Prostate gland (tissue), 2 donors: ENCODE measurements at regions of chr10 and their contacts with region 1.

Region 1: DNA sequence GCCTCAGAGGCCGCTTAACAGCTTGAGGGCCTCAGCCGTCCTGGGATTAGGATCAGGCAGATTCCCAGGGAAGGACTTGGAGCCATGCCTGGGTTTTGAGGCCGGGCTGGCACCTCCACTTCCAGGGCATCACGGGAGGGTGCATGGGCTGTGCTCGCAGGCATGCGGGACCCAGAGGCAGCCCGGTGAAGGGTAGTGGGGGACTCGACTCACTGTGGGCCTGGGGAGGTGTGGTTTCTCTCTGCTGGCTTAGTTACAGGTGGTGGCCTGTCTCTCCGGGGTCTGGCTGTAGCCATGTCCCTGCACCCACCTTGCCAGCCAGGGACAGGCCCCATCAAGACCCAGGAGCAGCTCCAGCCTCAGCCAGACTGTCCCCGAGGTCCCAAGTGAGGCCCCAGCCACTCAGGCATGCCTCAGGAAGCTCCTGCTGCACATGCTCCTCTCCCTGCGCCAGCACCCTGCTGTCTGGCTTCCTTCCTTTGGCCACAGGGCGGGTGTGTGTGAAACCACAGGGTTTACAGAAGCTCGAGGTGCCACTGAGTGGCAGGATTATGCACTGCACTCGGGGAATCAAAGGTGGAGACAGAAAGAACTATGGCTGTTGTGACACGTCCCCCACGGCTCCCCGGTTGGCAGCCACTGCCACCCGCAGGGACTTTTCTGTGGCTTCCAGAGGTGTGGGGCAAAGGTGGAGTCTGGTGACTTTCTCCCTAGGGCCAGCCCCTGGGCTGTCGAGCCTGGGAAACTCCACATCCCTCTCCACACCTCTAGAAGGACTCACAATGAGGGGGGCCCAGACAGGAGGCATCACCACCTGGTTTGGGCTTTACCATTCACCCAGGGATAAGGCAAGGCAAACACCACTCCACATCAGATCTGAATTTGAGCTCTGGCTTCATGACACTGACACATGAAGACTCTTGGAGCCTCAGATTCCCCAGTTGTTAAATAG is 19.7 kb downstream of the GOLGA7B start:
- DNase-seq: peak; percentile 86
- H3K4me3 ChIP-seq: no peak overlapping the region
- H3K27ac ChIP-seq: no peak overlapping the region
- H3K4me1 ChIP-seq: peaks cover 3% of the 10 kb centered on the region
- H3K27me3 ChIP-seq: no peaks in the 10 kb centered on the region
- CTCF ChIP-seq: peak; percentile 44 to 96 (median 74)
- POLR2A ChIP-seq: no peak

Region 2: GRCh38 chr10:97759158-97759887 is 110.0 kb before region 1 on chr10:
- intact Hi-C with region 1: loop called (anchors 2 kb)
- DNase-seq: peak; percentile 21
- H3K4me3 ChIP-seq: no peak overlapping the region
- H3K27ac ChIP-seq: no peak overlapping the region
- H3K4me1 ChIP-seq: no peaks in the 10 kb centered on the region
- H3K27me3 ChIP-seq: no peaks in the 10 kb centered on the region
- CTCF ChIP-seq: peak in 3 of 4 experiments; percentile 47 to 68 (median 51)
- POLR2A ChIP-seq: no peak

Region 3: GRCh38 chr10:97792141-97792721 is 77.1 kb before region 1 on chr10:
- intact Hi-C with region 1: loop called (anchors 5 kb)
- DNase-seq: peak; percentile 63
- H3K4me3 ChIP-seq: no peak overlapping the region
- H3K27ac ChIP-seq: no peak overlapping the region
- H3K4me1 ChIP-seq: no peaks in the 10 kb centered on the region
- H3K27me3 ChIP-seq: peaks cover 5% of the 10 kb centered on the region
- CTCF ChIP-seq: peak; percentile 70 to 87 (median 78)
- POLR2A ChIP-seq: no peak